ENCODE measurements at regions of chr5 and their contacts with region 1.

Region 1: GRCh38 chr5:7856855-7857254 is 5.9 kb upstream of the CFAP90 start:
- H3K4me3 ChIP-seq: no peak overlapping the region
- H3K27ac ChIP-seq: no peak overlapping the region
- H3K4me1 ChIP-seq: no peaks in the 10 kb centered on the region; the same call in 1 of the 2 replicates
- CTCF ChIP-seq: peak; percentile 62; the same call in 1 of the 2 replicates

Region 2: GRCh38 chr5:7261049-7261448 is 595.8 kb before region 1 on chr5:
- CTCF ChIA-PET with region 1: interaction called, 24 read pairs
- POLR2A ChIA-PET with region 1: no interaction called
- H3K4me3 ChIP-seq: no peak overlapping the region
- H3K27ac ChIP-seq: no peak overlapping the region
- H3K4me1 ChIP-seq: no peaks in the 10 kb centered on the region
- CTCF ChIP-seq: peak; percentile 18; the same call in 1 of the 2 replicates

Region 3: DNA sequence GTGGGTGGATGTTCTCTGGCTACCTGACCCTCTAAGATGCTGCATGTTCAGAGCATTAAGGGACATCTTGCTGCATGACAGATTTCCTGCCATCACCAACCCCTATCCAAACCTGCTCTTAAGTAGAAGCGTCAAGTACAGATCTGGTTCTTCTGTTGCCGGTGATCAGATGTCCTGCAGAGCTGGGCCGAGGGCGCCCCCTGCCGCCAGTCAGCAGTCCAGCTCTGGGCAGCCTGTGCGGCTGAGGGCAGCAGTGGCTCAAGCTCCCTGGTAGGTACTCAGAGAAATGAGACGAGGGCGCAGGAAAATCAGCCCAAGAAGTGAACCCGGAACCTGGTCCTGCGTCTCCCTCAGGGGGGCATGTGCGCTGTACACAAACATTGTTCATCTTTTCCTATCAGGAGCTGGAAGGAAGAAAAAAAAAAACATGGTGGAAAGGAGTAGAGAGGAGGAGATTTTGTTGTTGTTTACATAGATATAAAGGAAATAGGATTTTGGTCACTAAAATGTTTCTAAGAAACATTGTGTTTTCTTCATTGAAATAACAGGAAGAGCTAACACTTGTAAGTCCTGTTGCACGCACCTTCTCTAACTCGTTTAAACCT is 101.8 kb before region 1 on chr5:
- CTCF ChIA-PET with region 1: interaction called, 20 read pairs
- POLR2A ChIA-PET with region 1: no interaction called
- H3K4me3 ChIP-seq: no peak overlapping the region
- H3K27ac ChIP-seq: no peak overlapping the region
- H3K4me1 ChIP-seq: peaks cover 5% of the 10 kb centered on the region; the same call in 1 of the 2 replicates
- CTCF ChIP-seq: peak; percentile 67; the same call in 1 of the 2 replicates

Region 4: GRCh38 chr5:7868773-7869473 is 12.1 kb after region 1 on chr5 and contains the starts of genes FASTKD3 and MTRR:
- CTCF ChIA-PET with region 1: interaction called, 17 read pairs
- POLR2A ChIA-PET with region 1: interaction called, 22 read pairs
- H3K4me3 ChIP-seq: peak within 1 kb of the TSS; percentile 96
- H3K27ac ChIP-seq: peak within 1 kb of the TSS; percentile 66; the same call in 1 of the 2 replicates
- H3K4me1 ChIP-seq: peaks cover 17% of the 10 kb centered on the region
- CTCF ChIP-seq: no peak; the same call in 1 of the 2 replicates

Region 5: GRCh38 chr5:7960142-7960541 is 103.3 kb after region 1 on chr5:
- CTCF ChIA-PET with region 1: no interaction called
- POLR2A ChIA-PET with region 1: no interaction called
- H3K4me3 ChIP-seq: no peak overlapping the region
- H3K27ac ChIP-seq: no peak overlapping the region
- H3K4me1 ChIP-seq: no peaks in the 10 kb centered on the region
- CTCF ChIP-seq: no peak

Region 6: DNA sequence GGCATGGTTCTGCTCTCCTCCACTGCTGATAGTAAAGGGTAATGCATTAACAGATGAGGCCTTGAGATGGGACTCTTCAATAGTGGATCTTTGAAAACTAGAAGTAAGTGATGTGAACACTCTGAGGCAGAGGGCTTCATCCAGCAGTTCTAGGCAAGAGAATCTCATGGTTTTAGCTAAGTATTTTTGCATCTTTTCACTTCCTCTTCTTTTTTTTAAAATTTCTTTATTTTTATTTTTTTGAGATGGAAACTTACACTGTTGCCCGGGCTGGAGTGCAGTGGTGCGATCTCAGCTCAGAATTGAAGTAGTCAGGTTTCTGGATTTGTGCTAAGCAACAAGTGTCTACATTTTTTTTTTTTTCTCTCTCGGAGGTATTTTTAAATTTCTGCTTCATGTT is 114.0 kb after region 1 on chr5:
- CTCF ChIA-PET with region 1: no interaction called
- POLR2A ChIA-PET with region 1: no interaction called
- H3K4me3 ChIP-seq: no peak overlapping the region
- H3K27ac ChIP-seq: no peak overlapping the region
- H3K4me1 ChIP-seq: no peaks in the 10 kb centered on the region
- CTCF ChIP-seq: no peak

Region 7: GRCh38 chr5:8239198-8239597 is 382.3 kb after region 1 on chr5:
- CTCF ChIA-PET with region 1: no interaction called
- POLR2A ChIA-PET with region 1: no interaction called
- H3K4me3 ChIP-seq: no peak overlapping the region
- H3K27ac ChIP-seq: no peak overlapping the region
- H3K4me1 ChIP-seq: no peaks in the 10 kb centered on the region
- CTCF ChIP-seq: no peak